Mammary epithelial cell (primary cell): ENCODE measurements at regions of chr5 and their contacts with region 1.

Region 1: GRCh38 chr5:141910271-141910673 is 13.4 kb upstream of the DELE1 start:
- DNase-seq: peak; percentile 68
- H3K4me3 ChIP-seq: no peak overlapping the region
- H3K27ac ChIP-seq: no peak overlapping the region
- H3K4me1 ChIP-seq: peaks cover 9% of the 10 kb centered on the region
- H3K27me3 ChIP-seq: no peaks in the 10 kb centered on the region
- CTCF ChIP-seq: no peak

Region 2: DNA sequence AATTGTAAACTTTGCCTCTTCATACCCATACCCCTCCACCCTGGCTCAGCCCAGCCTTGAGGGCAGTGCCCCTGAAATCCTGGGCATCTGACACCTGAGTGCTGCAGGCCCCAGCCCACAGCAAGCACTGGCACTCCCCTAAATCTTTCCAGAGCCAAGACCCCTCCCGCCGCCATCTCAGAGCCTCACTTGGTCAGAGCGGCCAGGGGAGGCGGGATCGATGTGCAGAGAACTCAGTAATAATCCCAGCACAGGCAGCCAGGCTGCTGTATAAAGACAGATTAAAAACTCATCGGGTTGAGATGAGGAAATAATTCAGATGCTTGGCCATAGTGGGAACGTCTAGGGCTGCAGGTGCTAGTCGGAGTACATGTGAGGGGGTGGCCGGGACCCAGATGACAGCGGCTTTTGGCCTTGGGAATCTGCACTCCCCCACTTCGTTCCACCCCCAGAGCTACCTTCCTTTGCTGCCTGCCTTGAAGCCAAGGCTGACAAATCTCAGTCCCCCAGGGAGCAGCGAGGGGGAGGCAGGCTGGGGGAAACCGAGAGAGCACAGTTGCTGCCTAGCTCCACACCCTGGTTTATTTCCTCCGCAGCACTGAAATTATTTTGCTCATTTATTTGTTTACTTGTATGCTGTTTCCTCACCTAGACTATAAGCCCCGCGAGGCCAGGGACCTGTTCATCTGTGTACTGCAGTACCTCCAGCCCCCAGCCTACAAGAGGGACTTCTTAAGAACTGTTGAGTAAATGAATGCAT is 208.7 kb before region 1 on chr5:
- CTCF ChIA-PET with region 1: no interaction called
- dilution Hi-C with region 1: no loop called
- in situ Hi-C with region 1: no loop called
- intact Hi-C with region 1: no loop called
- DNase-seq: no peak
- H3K4me3 ChIP-seq: no peak overlapping the region
- H3K27ac ChIP-seq: no peak overlapping the region
- H3K4me1 ChIP-seq: peaks cover 9% of the 10 kb centered on the region
- H3K27me3 ChIP-seq: peaks cover 5% of the 10 kb centered on the region
- CTCF ChIP-seq: no peak

Region 3: DNA sequence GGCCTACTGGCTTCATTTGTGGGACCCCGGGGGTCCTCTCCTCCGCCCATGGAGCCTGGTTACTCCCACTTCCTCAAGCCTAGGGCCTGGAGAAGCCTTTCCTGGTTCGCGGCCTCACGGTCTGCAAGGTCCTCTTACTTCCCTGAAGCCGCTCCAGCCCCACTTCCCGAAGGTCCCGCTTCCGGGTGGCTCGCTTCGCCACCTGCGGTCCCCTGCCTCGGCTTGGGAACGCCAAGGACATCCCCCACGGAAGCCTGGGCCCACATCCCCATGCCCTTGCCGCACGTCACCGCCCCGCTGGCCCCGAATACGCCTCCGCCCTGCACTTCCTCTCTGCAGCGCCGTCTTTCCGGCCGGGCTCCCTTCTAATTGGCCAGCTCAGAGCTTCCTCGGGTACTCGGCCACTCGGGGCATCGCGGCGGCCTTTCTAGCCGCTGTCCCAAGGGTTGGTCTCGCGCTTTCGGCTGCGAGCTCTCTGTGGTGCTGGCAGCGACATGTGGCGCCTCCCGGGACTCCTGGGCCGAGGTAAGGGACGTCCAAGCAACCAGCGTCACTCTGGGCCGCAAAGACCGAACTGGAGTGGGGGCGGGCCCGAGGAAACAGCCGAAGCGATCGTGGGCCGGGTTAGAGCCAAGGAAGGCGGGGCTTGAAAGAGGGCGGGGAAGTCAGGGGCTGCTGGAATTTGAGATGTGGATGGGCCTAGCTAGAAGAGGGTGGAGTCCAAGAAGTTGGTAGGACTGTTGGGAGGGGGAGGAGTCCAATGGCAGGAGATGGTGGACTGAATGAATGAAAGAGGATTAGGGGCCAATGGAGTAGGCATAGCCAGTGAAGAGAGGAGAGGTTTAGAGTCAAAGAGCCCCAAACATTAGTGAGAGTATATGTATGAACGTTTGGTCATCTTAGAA is 13.4 kb after region 1 on chr5 and contains the start of gene DELE1:
- CTCF ChIA-PET with region 1: no interaction called
- dilution Hi-C with region 1: no loop called
- in situ Hi-C with region 1: no loop called
- intact Hi-C with region 1: loop called (anchors 1 kb)
- DNase-seq: peak; percentile 92
- H3K4me3 ChIP-seq: peak within 1 kb of the TSS; percentile 83 to 94 (median 89)
- H3K27ac ChIP-seq: peak within 1 kb of the TSS; percentile 81
- H3K4me1 ChIP-seq: peaks cover 8% of the 10 kb centered on the region
- H3K27me3 ChIP-seq: no peaks in the 10 kb centered on the region
- CTCF ChIP-seq: no peak
- total RNA-seq, gene DELE1: 39.5 to 51.4 TPM